ENCODE measurements at regions of chr11 and their contacts with region 1.

Region 1: DNA sequence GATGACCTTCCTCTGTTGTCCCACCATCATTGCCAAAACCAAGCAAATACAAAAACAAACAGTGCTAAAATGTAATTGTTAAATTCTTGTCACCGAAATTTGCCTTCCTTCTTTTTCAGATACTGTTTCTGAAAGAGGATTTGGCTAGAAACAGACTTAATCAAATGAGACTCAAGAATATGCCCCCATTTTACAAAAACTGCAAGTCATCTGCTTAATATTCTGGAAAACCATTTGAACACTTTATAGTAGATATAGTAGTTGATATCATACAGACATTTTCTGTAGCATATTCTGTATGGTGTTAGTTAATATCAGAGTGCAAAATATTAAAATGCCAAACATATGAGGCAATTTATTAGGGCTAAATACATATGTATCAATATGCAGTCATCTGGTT is 3.5 kb downstream of the OR5M1 start:
- DNase-seq: no peak
- ATAC-seq: no peak
- H3K4me3 Mint-ChIP-seq: no peak overlapping the region
- H3K27ac Mint-ChIP-seq: no peak overlapping the region
- H3K4me1 Mint-ChIP-seq: no peaks in the 10 kb centered on the region
- H3K27me3 Mint-ChIP-seq: no peaks in the 10 kb centered on the region

Region 2: DNA sequence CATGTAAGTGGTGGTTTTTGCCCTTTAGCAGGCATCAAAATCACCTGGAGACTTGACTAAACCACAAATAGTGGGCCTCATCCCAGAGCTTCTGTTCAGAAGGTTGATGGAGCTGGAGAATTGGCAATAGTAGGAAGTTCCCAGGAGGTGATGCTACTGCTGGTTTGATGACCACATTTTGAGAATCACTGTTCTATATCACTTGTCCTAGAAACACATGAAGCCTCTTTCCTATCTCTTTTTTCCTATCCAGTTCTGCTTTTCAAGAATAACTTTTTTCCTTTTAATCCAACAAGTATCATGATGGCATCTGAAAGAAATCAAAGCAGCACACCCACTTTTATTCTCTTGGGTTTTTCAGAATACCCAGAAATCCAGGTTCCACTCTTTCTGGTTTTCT is 838.0 kb before region 1 on chr11 and contains the start of gene OR5D13:
- CTCF ChIA-PET with region 1: no interaction called
- POLR2A ChIA-PET with region 1: no interaction called
- intact Hi-C with region 1: loop called in 1 of 2 experiments (anchors 10 kb)
- DNase-seq: no peak
- ATAC-seq: no peak
- H3K4me3 Mint-ChIP-seq: no peak within 1 kb of the TSS
- H3K27ac Mint-ChIP-seq: no peak within 1 kb of the TSS
- H3K4me1 Mint-ChIP-seq: no peaks in the 10 kb centered on the region
- H3K27me3 Mint-ChIP-seq: no peaks in the 10 kb centered on the region
- total RNA-seq, gene OR5D13: not detected

Region 3: GRCh38 chr11:55920537-55920936 is 690.6 kb before region 1 on chr11:
- CTCF ChIA-PET with region 1: no interaction called
- POLR2A ChIA-PET with region 1: no interaction called
- intact Hi-C with region 1: no loop called
- DNase-seq: no peak
- ATAC-seq: no peak
- H3K4me3 Mint-ChIP-seq: no peak overlapping the region
- H3K27ac Mint-ChIP-seq: no peak overlapping the region
- H3K4me1 Mint-ChIP-seq: no peaks in the 10 kb centered on the region
- H3K27me3 Mint-ChIP-seq: no peaks in the 10 kb centered on the region

Region 4: DNA sequence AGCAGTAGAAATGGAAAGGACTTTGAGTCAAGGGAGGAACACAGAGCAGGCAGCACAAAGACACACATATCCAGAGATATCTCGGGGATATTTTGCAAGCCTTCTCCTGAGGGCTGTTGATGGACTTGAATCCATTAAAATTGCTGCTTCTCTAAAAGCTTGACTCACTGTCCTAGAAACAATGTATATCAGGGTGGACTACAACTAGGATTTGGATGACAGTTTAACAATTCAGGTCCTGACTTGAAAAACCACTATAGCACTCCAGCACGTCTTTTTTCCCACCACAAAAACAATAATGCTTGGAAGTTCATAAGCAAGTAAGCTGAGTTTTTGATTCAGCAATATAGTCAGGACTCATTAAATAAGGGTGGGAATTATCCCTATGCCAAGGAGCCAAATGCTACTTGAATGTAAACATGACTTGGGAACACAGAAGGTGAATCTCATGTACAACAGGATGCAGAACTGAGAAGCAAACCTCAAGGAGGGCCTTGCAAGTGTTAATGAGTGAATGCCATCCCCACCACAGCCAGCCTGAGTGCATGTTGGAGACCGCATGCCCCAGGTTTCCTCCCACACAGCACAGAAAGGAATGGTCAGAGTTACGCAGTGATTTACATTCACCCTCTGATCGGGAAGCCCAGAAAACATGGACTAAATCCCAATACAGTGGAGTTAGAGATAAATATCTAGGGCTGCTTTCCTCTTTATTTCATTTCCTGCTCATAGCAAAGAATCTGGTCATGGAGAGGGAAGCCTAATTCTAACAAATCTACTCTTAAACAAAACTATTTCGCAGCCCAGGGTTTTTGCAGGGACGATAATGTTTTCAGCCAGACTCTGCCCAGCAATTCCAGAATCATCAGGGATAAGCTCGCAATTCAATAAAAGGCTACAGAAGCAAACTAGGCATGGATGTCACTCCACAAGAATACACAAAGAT is 235.7 kb after region 1 on chr11:
- CTCF ChIA-PET with region 1: no interaction called
- POLR2A ChIA-PET with region 1: no interaction called
- intact Hi-C with region 1: no loop called
- DNase-seq: no peak
- ATAC-seq: no peak
- H3K4me3 Mint-ChIP-seq: no peak overlapping the region
- H3K27ac Mint-ChIP-seq: no peak overlapping the region
- H3K4me1 Mint-ChIP-seq: no peaks in the 10 kb centered on the region
- H3K27me3 Mint-ChIP-seq: peaks cover 3% of the 10 kb centered on the region

Measured in activated CD4-positive, alpha-beta T cell treated with anti-CD3 and anti-CD28 coated beads for 36 hours (primary cell).